ENCODE measurements at regions of chr1 and their contacts with region 1.

Region 1: DNA sequence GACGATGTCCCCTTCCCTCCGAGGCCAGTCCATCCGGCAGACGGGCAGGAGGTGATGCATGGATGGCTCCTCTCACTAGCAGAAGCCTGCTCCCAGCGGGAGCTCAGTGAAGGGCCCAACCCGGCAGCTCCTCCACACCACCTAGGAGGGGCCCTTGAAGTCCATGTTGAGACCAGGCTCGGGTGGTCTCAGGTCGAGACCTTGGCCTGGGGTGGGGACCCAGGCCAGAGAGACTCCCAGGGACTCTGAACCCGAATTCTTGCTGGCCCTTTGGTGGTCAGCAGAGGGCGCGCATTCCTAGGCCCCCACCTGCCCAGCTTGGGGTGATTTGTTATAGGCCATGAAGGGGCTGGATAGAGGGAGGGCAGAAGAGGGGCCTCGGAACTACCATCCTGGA is 642 bp upstream of the NT5C1A start:
- DNase-seq: peak in 11 of 14 experiments; percentile 27 to 69 (median 42)
- ATAC-seq: peak; percentile 39
- H3K4me3 ChIP-seq: peak overlapping the region; percentile 28
- H3K4me3 Mint-ChIP-seq: peak overlapping the region; percentile 76
- H3K27ac ChIP-seq: no peak overlapping the region
- H3K27ac Mint-ChIP-seq: no peak overlapping the region
- H3K4me1 ChIP-seq: peaks cover 17% of the 10 kb centered on the region
- H3K4me1 Mint-ChIP-seq: peaks cover 8% of the 10 kb centered on the region
- H3K27me3 ChIP-seq: peaks cover 45 to 46% of the 10 kb centered on the region in 2 experiments
- H3K27me3 Mint-ChIP-seq: peaks cover 43% of the 10 kb centered on the region
- CTCF ChIP-seq: peak; percentile 63

Region 2: DNA sequence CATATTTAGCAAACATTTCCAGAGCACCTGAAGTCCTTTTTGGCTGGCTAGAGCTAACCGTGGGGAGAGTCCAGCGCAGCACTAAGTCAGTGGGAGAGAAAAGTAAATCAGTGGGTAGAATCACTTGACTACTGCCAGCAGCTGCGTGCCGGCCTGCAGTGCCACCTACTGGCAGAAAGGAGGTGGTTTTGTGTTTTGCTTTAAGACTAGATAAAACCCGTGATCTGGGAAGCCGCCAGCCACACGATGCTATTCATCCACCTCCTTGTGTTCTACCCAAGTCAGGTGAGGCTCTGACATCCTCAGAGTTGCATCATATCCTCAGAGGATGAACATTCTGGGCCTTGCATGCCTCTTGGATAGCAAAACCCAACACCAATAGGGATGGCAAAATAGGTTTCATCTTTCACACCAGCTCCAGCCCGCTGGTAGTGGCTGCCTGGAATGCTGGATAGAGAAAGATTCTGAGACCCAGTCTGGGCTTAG is 19.0 kb before region 1 on chr1:
- CTCF ChIA-PET with region 1: interaction called, 21 read pairs
- POLR2A ChIA-PET with region 1: no interaction called
- intact Hi-C with region 1: no loop called
- DNase-seq: peak; percentile 59 to 85 (median 68)
- ATAC-seq: peak; percentile 88
- H3K4me3 ChIP-seq: no peak overlapping the region
- H3K4me3 Mint-ChIP-seq: no peak overlapping the region
- H3K27ac ChIP-seq: no peak overlapping the region
- H3K27ac Mint-ChIP-seq: no peak overlapping the region
- H3K4me1 ChIP-seq: peaks cover 11% of the 10 kb centered on the region
- H3K4me1 Mint-ChIP-seq: peaks cover 7% of the 10 kb centered on the region
- H3K27me3 ChIP-seq: peaks cover 3 to 7% of the 10 kb centered on the region in 2 experiments
- H3K27me3 Mint-ChIP-seq: peaks cover 13% of the 10 kb centered on the region
- CTCF ChIP-seq: peak; percentile 98

Region 3: DNA sequence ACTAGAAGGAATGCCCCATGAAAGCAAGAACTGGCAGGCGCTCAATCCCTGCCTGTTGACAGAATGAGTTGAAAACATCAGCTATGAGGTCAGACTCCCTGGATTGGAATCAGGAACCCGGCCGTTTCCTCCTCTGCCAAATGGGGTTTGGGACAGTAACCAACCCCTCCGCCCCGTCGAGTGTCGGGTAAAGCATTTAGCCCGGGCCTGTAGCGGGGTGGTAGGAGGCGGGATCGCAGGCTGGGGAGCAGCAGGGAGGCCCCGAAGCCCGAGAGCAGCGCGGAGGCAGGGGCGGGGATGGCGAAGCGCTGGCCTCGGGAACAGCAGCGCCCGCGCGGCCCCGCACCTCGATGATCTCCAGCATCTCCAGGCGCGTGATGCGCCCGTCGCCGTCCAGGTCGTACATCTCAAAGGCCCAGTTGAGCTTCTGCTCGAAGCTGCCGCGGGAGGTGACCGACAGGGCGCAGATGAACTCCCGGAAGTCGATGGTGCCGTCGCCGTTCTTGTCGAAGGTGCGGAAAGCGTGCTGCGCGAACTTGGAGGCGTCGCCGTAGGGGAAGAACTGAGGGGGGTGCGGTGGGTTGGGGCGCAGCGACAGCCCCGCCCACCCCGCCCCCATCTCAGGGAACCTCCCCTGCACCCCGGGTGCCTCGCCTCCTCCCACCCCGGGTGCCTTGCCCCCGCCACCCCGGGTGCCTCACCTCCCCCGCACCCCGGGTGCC is 11.2 kb after region 1 on chr1:
- CTCF ChIA-PET with region 1: no interaction called
- POLR2A ChIA-PET with region 1: interaction called, 19 read pairs
- intact Hi-C with region 1: loop called in 1 of 2 experiments (anchors 2 kb)
- DNase-seq: peak; percentile 38 to 82 (median 57)
- ATAC-seq: peak; percentile 74
- H3K4me3 ChIP-seq: peak overlapping the region; percentile 19
- H3K4me3 Mint-ChIP-seq: no peak overlapping the region
- H3K27ac ChIP-seq: no peak overlapping the region
- H3K27ac Mint-ChIP-seq: peak overlapping the region; percentile 72
- H3K4me1 ChIP-seq: peaks cover 32% of the 10 kb centered on the region
- H3K4me1 Mint-ChIP-seq: peaks cover 44% of the 10 kb centered on the region
- H3K27me3 ChIP-seq: peaks cover 0 to 2% of the 10 kb centered on the region in 2 experiments
- H3K27me3 Mint-ChIP-seq: peaks cover 27% of the 10 kb centered on the region
- CTCF ChIP-seq: no peak

Region 4: DNA sequence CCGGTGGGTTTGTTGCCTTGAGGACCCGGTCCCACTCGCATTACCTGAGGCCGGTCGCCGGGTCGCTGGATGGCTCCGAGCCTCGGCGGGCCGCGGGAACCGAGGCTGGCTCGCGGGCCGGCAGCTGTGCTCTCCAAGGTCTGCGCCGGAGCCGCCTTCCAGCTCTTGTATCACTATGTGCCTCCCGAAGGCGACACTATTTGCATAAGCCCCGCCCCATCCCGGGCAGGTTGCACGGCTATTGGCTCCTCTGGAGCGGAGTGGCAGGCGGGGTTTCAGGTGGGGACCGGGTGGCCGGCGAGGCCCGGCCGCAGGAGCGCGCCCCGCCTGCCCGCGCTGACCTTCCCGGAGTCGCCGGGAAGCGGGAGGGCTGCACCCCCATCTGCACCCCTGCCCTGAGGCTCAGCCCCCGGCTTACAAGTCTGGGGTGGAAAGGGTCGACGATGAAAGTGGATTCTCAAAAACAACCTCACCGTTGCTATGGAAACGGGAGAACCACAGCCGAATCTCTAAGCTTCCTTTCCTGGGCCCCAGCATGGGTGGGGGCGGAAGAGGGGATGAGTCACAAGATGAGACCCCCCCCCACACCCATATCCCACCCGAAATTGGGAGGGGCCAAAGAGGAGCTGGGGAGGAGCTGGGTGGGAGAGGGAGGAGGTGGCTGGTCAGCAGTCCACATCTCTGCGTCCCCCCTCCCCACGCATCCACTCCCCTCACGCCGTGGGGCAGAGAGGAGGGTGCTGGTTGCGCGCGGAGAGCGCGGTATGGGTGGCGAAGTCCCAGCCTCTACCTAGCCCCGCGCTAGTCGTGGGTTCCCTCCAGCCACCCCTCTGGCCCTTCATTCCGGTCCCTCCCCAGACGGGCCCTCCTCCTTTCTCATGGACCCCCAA is 19.0 kb after region 1 on chr1 and contains the start of gene HPCAL4:
- CTCF ChIA-PET with region 1: interaction called, 4 read pairs
- POLR2A ChIA-PET with region 1: interaction called, 33 read pairs
- intact Hi-C with region 1: loop called in 1 of 2 experiments (anchors 2 kb)
- DNase-seq: peak; percentile 81 to 96 (median 90)
- ATAC-seq: peak; percentile 89
- H3K4me3 ChIP-seq: peak within 1 kb of the TSS; percentile 67
- H3K4me3 Mint-ChIP-seq: peak within 1 kb of the TSS; percentile 91
- H3K27ac ChIP-seq: peak within 1 kb of the TSS; percentile 17 to 61
- H3K27ac Mint-ChIP-seq: peak within 1 kb of the TSS; percentile 82
- H3K4me1 ChIP-seq: peaks cover 40% of the 10 kb centered on the region
- H3K4me1 Mint-ChIP-seq: peaks cover 48% of the 10 kb centered on the region
- H3K27me3 ChIP-seq: peaks cover 0 to 12% of the 10 kb centered on the region in 2 experiments
- H3K27me3 Mint-ChIP-seq: peaks cover 15% of the 10 kb centered on the region
- CTCF ChIP-seq: no peak
- total RNA-seq, gene HPCAL4: 22.8 to 22.9 TPM

Region 5: GRCh38 chr1:39720094-39720999 is 47.8 kb after region 1 on chr1:
- CTCF ChIA-PET with region 1: interaction called, 13 read pairs
- POLR2A ChIA-PET with region 1: interaction called, 4 read pairs
- intact Hi-C with region 1: loop called (anchors 1 to 2 kb)
- DNase-seq: peak in 3 of 14 experiments; percentile 80 to 83 (median 81)
- ATAC-seq: peak; percentile 90
- H3K4me3 ChIP-seq: no peak overlapping the region
- H3K4me3 Mint-ChIP-seq: no peak overlapping the region
- H3K27ac ChIP-seq: no peak overlapping the region
- H3K27ac Mint-ChIP-seq: no peak overlapping the region
- H3K4me1 ChIP-seq: no peaks in the 10 kb centered on the region
- H3K4me1 Mint-ChIP-seq: no peaks in the 10 kb centered on the region
- H3K27me3 ChIP-seq: peaks cover 9 to 15% of the 10 kb centered on the region in 2 experiments
- H3K27me3 Mint-ChIP-seq: peaks cover 46% of the 10 kb centered on the region
- CTCF ChIP-seq: peak; percentile 78

Measured in CD4-positive, alpha-beta T cell (primary cell).